GM12878 (cell line): ENCODE measurements at regions of chr2 and their contacts with region 1.

Region 1: DNA sequence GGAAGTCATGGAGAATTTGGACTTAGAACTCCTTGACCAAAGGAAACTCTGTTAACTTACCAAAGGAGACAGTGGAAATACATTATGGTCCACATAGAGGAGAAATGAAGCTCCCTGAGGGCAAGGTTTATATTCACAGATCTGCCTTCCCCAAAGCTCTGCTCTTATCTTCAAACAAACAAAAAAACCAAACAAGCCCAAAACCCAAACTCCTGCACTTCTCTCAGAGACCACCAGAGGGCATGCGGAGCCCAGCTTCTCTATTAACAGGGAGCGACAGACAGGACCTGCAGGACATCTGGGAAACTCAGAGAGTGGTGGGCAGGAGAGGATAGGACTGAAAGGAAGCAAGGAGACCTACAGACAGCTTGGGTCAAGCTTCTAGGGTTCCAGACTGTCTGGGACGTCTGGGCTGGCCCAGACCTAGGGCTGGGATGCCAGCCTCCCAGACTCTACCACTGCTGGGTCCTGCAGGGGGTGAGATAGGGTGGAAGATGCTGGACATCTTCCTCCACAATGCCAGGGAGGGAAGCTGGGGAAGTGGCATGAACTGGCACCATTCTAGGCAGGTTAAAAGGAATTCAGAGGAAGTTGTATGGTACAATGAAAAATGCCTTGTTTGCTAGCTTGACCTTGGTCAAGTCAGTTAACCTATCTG is 4.0 kb upstream of the WNT10A start:
- DNase-seq: peak; percentile 56
- ATAC-seq: peak; percentile 4
- H3K4me3 ChIP-seq: no peak overlapping the region
- H3K27ac ChIP-seq: no peak overlapping the region
- H3K4me1 ChIP-seq: peaks cover 38% of the 10 kb centered on the region
- H3K27me3 ChIP-seq: peaks cover 10 to 23% of the 10 kb centered on the region in 2 experiments
- CTCF ChIP-seq: peak; percentile 96 to 99 (median 98); a peak in 5 of 6 replicates
- EP300 ChIP-seq: no peak
- POLR2A ChIP-seq: no peak
- RAD21 ChIP-seq: peak; percentile 100

Region 2: DNA sequence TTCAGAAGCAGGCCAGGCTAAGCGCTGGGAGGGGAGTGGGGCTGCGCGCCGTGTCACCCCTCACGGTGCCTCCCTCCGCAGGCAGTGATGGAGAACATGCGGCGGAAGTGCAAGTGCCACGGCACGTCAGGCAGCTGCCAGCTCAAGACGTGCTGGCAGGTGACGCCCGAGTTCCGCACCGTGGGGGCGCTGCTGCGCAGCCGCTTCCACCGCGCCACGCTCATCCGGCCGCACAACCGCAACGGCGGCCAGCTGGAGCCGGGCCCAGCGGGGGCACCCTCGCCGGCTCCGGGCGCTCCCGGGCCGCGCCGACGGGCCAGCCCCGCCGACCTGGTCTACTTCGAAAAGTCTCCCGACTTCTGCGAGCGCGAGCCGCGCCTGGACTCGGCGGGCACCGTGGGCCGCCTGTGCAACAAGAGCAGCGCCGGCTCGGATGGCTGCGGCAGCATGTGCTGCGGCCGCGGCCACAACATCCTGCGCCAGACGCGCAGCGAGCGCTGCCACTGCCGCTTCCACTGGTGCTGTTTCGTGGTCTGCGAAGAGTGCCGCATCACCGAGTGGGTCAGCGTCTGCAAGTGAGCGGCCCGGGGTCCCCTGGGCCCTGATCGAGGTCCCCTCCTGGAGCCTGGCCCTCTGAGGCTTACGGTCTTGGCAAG is 16.1 kb after region 1 on chr2:
- CTCF ChIA-PET with region 1: interaction called, 1,364 read pairs
- POLR2A ChIA-PET with region 1: interaction called, 360 read pairs
- RAD21 ChIA-PET with region 1: interaction called, 871 read pairs
- SMC1A ChIA-PET with region 1: interaction called, 780 read pairs
- in situ Hi-C with region 1: no loop called
- intact Hi-C with region 1: loop called (anchors 1 kb)
- DNase-seq: peak; percentile 80
- ATAC-seq: peak; percentile 57
- H3K4me3 ChIP-seq: peak overlapping the region; percentile 71
- H3K27ac ChIP-seq: peak overlapping the region; percentile 95
- H3K4me1 ChIP-seq: peaks cover 60% of the 10 kb centered on the region
- H3K27me3 ChIP-seq: no peaks in the 10 kb centered on the region
- CTCF ChIP-seq: peak; percentile 41 to 68 (median 54); a peak in 4 of 6 replicates
- EP300 ChIP-seq: peak; percentile 68 to 79; a peak in 3 of 4 replicates
- POLR2A ChIP-seq: peak; percentile 70
- RAD21 ChIP-seq: no peak

Region 3: DNA sequence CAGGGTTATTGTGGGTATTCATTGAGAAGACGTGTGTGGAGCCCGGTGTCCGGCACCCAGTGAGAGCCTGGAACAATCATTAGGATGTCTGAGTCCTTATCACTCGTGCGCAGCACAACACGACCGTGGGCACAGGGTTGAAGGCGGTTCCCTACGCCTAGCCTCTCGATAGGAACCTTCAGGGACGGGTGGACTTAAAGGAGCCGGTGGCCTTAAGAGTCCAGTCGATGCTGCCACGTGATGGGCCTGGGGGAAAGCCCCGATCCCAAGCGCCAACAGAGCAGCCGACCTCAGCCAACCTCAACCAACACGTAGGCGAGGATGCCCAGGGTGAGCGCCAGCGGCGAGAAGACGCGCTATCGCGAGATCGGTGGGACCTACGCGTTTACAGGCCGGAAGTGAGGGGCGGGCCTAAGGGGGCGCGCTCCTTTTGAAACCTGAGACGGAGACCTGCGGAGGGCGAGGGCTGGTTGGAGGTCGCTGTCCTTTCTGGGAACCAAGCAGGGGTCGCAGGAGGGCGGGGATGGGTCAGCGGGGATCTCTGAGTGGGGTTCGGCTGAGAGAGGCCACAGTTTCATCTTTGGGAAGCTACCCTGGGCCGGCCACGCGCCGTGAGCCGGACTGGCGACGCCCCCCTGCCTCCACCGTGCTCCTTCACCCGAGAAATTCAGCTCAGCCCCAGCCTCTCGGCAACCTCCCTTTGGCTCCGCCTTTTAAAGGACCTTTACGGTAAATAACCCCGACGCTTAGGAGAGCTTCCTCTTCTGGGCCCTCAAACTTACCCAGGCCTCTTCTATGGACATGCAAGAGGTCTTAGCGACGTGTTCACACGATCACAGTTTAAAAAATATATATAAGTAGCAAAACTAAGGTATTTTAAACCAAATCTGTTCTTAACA is 32.3 kb after region 1 on chr2:
- CTCF ChIA-PET with region 1: interaction called, 1,364 read pairs
- POLR2A ChIA-PET with region 1: interaction called, 5 read pairs
- RAD21 ChIA-PET with region 1: interaction called, 29 read pairs
- SMC1A ChIA-PET with region 1: interaction called, 57 read pairs
- in situ Hi-C with region 1: no loop called
- intact Hi-C with region 1: no loop called
- DNase-seq: peak; percentile 89
- ATAC-seq: peak; percentile 97
- H3K4me3 ChIP-seq: peak overlapping the region; percentile 73
- H3K27ac ChIP-seq: peak overlapping the region; percentile 63
- H3K4me1 ChIP-seq: peaks cover 8% of the 10 kb centered on the region
- H3K27me3 ChIP-seq: no peaks in the 10 kb centered on the region
- CTCF ChIP-seq: no peak
- EP300 ChIP-seq: 0 out of 4 replicates have a peak, but pooled peaks of 1 of the 2 experiments have one; percentile 22
- POLR2A ChIP-seq: peak; percentile 70; the same call in 1 of the 2 replicates
- RAD21 ChIP-seq: no peak

Region 4: GRCh38 chr2:218959141-218959731 is 82.5 kb after region 1 on chr2 and contains the start of gene CDK5R2:
- CTCF ChIA-PET with region 1: interaction called, 11 read pairs
- POLR2A ChIA-PET with region 1: no interaction called
- RAD21 ChIA-PET with region 1: interaction called, 5 read pairs
- SMC1A ChIA-PET with region 1: interaction called, 5 read pairs
- in situ Hi-C with region 1: no loop called
- intact Hi-C with region 1: no loop called
- DNase-seq: peak; percentile 62
- ATAC-seq: peak; percentile 99
- H3K4me3 ChIP-seq: peak within 1 kb of the TSS; percentile 64; the same call in 1 of the 2 replicates
- H3K27ac ChIP-seq: no peak within 1 kb of the TSS
- H3K4me1 ChIP-seq: no peaks in the 10 kb centered on the region
- H3K27me3 ChIP-seq: peaks cover 14 to 16% of the 10 kb centered on the region in 2 experiments; a peak in 3 of 4 replicates
- CTCF ChIP-seq: no peak
- EP300 ChIP-seq: no peak
- POLR2A ChIP-seq: no peak; the same call in 1 of the 2 replicates
- RAD21 ChIP-seq: no peak
- polyA plus RNA-seq, gene CDK5R2: not detected

Region 5: GRCh38 chr2:218995972-218996711 is 119.5 kb after region 1 on chr2:
- CTCF ChIA-PET with region 1: interaction called, 6 read pairs
- POLR2A ChIA-PET with region 1: no interaction called
- RAD21 ChIA-PET with region 1: interaction called, 10 read pairs
- SMC1A ChIA-PET with region 1: no interaction called
- in situ Hi-C with region 1: no loop called
- intact Hi-C with region 1: no loop called
- DNase-seq: no peak
- ATAC-seq: peak; percentile 90
- H3K4me3 ChIP-seq: no peak overlapping the region
- H3K27ac ChIP-seq: no peak overlapping the region
- H3K4me1 ChIP-seq: no peaks in the 10 kb centered on the region
- H3K27me3 ChIP-seq: peaks cover 22 to 32% of the 10 kb centered on the region in 2 experiments
- CTCF ChIP-seq: peak; percentile 78 to 88 (median 82)
- EP300 ChIP-seq: no peak
- POLR2A ChIP-seq: no peak
- RAD21 ChIP-seq: peak; percentile 72